ENCODE measurements at regions of chr17 and their contacts with region 1.

Region 1: DNA sequence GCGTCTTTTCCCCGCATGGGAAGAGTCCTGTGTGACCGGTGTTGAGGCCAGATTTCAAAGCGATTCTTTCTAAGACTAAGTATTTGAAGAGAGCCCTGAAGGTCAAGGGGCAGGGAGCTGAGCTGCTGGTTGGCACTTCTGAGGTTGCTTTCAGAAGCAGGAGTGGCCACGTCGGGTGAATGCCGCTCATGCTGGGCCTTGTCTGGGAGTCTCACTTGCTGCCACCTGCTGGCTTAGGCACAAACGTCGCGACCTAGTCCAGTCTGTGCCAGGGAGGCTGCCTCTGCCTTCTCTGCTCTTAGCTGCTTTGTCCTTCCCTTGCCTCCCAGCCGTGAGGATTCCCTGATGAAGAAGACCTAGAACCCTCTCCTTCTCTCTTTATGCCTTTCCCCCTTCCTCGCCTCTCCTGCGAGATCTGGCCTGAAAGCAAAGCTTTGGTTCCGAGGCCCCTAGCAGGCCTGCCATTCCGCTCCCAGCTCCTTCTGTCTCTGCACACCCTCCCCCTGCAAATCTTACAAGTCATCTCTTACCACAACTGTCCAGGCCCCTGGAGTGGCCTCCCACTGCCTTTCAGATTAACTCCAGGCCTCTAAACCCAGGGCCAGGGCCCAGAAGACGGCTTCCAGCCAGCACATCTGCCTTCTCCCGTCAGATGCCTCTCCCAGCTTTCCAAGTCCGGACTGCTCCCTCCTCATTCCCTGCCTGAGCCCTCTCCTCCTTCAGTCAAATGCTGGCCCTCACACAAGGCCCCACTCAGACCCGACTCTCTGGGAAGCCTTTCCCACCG is 11.4 kb downstream of the CTNS start:
- DNase-seq: no peak
- H3K4me3 ChIP-seq: no peak overlapping the region
- H3K27me3 ChIP-seq: no peaks in the 10 kb centered on the region
- CTCF ChIP-seq: peak; percentile 67

Region 2: DNA sequence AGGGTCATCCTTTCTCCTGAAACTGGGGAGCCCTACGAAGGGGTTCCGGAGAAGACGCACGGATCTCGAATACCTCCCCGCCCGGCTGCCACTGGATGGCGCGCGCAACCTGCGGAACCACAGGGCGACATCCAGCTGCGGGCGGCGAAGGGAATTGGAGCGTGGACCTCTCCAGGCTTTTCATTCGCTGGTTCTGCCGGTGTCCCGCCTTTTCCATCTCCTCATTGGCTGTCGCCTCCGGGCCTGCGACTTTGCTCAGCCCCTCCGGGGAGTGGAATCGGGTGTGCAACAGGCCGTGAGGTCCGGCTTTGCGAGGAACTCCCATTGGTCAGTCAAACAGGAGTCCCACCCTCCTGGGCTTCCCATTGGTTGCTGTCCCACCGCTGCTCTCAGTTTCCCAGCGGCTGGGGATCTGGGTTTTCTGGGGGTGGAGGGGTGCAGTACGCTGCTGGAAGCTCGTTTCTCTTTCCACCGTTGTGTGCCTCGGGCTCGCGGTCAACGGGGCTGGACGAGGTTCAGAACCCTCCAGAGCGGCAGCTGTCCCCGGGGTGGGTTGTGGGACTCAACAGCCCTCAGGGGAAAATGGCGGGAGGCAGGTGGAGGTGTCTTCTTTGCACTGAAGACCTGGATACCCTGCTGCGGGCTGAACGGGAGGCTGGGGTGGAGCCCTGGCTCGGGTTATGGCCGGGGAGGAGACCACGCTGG is 599.0 kb before region 1 on chr17:
- CTCF ChIA-PET with region 1: interaction called, 15 read pairs
- POLR2A ChIA-PET with region 1: no interaction called
- DNase-seq: peak; percentile 96
- H3K4me3 ChIP-seq: peak overlapping the region; percentile 89
- H3K27me3 ChIP-seq: no peaks in the 10 kb centered on the region
- CTCF ChIP-seq: peak; percentile 84

Region 3: DNA sequence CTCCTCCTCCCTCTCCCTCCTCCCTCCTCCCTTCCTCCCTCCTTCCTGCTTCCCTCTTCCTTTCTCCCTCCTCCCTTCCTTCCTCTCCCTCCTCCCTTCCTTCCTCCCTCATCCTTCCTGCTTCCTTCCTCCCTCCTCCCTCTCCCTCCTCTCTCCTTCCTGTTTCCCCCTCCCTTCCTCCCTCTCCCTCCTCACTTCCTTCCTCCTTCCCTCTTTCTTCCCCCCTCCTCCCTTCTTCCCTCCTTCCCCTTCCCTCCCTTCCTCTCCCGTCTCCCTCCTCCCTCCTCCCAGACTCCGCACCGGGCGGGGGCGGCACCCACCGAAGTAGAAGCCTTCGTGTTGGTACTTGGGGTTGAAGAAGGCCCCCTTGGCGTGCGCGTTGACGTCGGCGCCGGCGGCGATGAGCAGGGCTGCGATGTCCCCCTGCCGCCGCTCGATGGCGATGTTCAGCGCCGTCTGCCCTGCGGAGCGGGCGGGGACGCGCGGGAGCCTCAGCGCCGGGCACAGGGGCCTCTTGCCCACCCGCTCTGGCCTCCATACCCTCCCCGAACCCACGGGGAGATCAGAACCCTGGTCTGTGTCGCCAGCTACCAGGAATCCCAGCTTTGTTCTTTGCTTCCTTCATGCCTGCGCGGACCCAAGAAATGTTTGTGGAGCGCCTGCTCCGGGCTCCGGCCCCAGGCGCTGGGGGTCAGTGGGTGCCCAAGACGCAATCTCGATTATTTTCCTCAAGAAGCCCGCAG is 112.5 kb before region 1 on chr17:
- CTCF ChIA-PET with region 1: interaction called, 23 read pairs
- POLR2A ChIA-PET with region 1: no interaction called
- DNase-seq: no peak
- H3K4me3 ChIP-seq: peak overlapping the region; percentile 32
- H3K27me3 ChIP-seq: no peaks in the 10 kb centered on the region
- CTCF ChIP-seq: peak; percentile 72

Region 4: DNA sequence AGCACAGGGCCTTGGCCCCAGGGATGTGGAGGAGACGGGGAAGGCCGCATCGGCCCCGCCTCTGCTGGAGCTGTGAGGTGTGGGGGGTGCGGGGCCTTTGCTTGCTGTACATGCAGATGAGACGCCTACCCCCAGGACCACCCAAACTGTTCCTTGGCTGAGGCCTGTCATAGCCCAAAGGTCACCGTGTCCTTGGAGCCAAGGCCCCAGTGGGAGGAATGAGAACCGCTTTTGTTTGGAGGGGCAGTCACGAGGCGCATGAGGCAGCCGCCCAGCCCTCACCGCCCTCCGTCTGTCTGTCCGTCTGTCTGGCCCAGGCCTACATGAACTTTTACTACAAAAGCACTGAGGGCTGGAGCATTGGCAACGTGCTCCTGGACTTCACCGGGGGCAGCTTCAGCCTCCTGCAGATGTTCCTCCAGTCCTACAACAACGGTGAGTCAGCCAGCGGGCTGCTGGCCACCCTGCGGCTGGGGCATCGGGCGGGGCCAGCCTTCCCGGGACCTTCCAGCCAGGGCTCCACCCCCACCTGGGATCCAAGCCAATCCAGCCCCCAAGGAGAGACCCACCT is 11.7 kb after region 1 on chr17:
- CTCF ChIA-PET with region 1: interaction called, 13 read pairs
- POLR2A ChIA-PET with region 1: no interaction called
- DNase-seq: peak; percentile 74
- H3K4me3 ChIP-seq: no peak overlapping the region
- H3K27me3 ChIP-seq: no peaks in the 10 kb centered on the region
- CTCF ChIP-seq: peak; percentile 54

Region 5: GRCh38 chr17:3723556-3724369 is 75.8 kb after region 1 on chr17 and contains the start of gene HASPIN:
- CTCF ChIA-PET with region 1: no interaction called
- POLR2A ChIA-PET with region 1: no interaction called
- DNase-seq: no peak
- H3K4me3 ChIP-seq: peak within 1 kb of the TSS; percentile 77
- H3K27me3 ChIP-seq: no peaks in the 10 kb centered on the region
- CTCF ChIP-seq: peak; percentile 48
- polyA plus RNA-seq, gene HASPIN: 2.1 and 2.9 TPM in 2 replicates

Region 6: GRCh38 chr17:3754458-3755334 is 106.7 kb after region 1 on chr17:
- CTCF ChIA-PET with region 1: no interaction called
- POLR2A ChIA-PET with region 1: no interaction called
- DNase-seq: no peak
- H3K4me3 ChIP-seq: no peak overlapping the region
- H3K27me3 ChIP-seq: peaks cover 1% of the 10 kb centered on the region; the same call in 1 of the 2 replicates
- CTCF ChIP-seq: no peak

Region 7: GRCh38 chr17:3827124-3827773 is 179.3 kb after region 1 on chr17:
- CTCF ChIA-PET with region 1: no interaction called
- POLR2A ChIA-PET with region 1: no interaction called
- DNase-seq: no peak
- H3K4me3 ChIP-seq: no peak overlapping the region
- H3K27me3 ChIP-seq: no peaks in the 10 kb centered on the region
- CTCF ChIP-seq: peak; percentile 70